Mammary epithelial cell (primary cell): ENCODE measurements at regions of chr1 and their contacts with region 1.

Region 1: DNA sequence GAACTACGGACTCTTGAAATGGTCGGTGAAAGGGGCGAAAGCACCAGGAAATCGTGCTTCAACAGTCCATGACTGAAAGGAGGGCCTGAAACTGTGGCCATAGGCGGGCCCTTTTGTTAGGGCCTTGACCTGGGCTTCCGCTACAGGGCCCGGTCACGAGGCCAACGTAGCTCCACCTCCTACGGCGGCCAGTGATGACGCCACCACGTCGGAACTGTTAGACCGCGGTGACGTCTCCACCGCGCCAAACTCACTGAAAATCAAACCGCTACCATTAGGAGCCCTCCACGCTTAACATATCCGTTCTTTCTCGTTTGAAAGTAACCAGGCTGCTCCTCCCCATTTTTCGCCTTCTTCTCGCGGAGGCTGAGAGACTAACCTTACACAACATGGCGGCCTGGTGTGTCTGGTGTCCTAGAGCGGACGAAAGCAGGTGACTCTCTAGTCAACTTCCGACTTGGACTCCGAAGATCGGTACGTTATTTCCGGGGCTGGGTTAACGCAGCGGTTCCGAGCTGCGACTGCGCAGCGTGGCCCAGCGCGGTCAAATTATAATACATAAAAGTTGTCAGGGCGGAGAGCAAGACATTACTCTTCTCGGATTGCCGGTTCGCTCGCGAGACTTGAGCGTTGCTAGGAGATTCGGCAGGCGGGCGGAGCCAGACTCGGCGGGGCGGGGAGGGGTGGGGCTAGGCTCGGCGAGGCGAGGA is 376 bp upstream of the CACYBP start:
- DNase-seq: peak; percentile 99
- H3K4me3 ChIP-seq: peak overlapping the region; percentile 65 to 98 (median 93)
- H3K27ac ChIP-seq: peak overlapping the region; percentile 97
- H3K4me1 ChIP-seq: peaks cover 30% of the 10 kb centered on the region
- H3K27me3 ChIP-seq: no peaks in the 10 kb centered on the region
- CTCF ChIP-seq: no peak

Region 2: DNA sequence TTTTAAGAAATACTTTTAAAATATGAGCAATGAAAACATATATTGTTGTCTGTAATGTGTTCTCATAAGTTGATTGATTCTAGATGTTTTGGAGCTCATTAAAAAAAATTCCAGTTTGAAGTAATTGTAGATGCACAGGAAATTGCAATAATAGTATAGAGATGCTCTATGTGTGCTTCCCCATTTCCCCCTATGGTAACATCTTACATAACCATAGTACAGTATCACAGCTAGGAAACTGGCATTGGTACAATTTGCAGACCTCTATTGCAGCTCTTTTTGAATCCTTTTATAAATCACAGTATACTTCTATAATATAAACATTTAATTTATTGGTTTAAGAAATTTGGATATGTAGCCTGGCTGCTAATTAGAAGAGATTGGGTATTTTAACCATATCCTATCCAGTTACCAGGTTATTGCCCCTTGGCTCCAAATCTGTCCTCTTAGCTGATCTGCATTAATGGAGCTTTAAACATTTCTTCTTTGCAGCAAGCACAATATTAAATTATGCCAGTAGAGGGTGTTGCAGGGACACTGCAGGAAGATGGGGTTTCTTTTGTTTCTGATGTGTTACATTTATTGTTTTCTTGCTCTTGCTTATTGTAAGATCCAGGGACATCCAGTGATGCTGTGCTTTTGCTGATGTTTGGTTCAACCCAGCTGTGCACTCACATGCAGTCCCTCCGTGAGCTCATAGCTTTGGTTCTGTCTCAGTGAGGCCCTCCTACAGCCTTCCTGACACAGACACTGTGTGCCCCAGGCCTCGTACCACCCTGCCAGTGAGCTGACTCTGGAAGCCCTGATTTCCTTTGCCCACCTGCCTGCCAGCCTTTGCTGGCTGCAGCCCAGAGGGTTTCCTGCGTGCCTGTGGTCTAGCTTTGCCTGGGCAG is 736.8 kb before region 1 on chr1:
- CTCF ChIA-PET with region 1: interaction called, 29 read pairs
- dilution Hi-C with region 1: no loop called
- in situ Hi-C with region 1: loop called (anchors 25 kb)
- intact Hi-C with region 1: loop called (anchors 10 kb)
- DNase-seq: peak; percentile 70
- H3K4me3 ChIP-seq: no peak overlapping the region
- H3K27ac ChIP-seq: no peak overlapping the region
- H3K4me1 ChIP-seq: peaks cover 6% of the 10 kb centered on the region
- H3K27me3 ChIP-seq: no peaks in the 10 kb centered on the region
- CTCF ChIP-seq: peak; percentile 81 to 84

Region 3: GRCh38 chr1:174769961-174770549 is 229.3 kb before region 1 on chr1:
- CTCF ChIA-PET with region 1: no interaction called
- dilution Hi-C with region 1: no loop called
- in situ Hi-C with region 1: no loop called
- intact Hi-C with region 1: loop called (anchors 1 kb)
- DNase-seq: peak; percentile 34
- H3K4me3 ChIP-seq: no peak overlapping the region
- H3K27ac ChIP-seq: no peak overlapping the region
- H3K4me1 ChIP-seq: no peaks in the 10 kb centered on the region
- H3K27me3 ChIP-seq: no peaks in the 10 kb centered on the region
- CTCF ChIP-seq: peak; percentile 68 to 72

Region 4: GRCh38 chr1:174789399-174789798 is 210.0 kb before region 1 on chr1:
- CTCF ChIA-PET with region 1: no interaction called
- dilution Hi-C with region 1: loop called (anchors 5 kb)
- in situ Hi-C with region 1: no loop called
- intact Hi-C with region 1: no loop called
- DNase-seq: peak; percentile 71
- H3K4me3 ChIP-seq: peak overlapping the region in 1 of 3 experiments; percentile 32
- H3K27ac ChIP-seq: peak overlapping the region; percentile 89
- H3K4me1 ChIP-seq: peaks cover 25% of the 10 kb centered on the region
- H3K27me3 ChIP-seq: no peaks in the 10 kb centered on the region
- CTCF ChIP-seq: no peak

Region 5: GRCh38 chr1:174815036-174815435 is 184.3 kb before region 1 on chr1:
- CTCF ChIA-PET with region 1: no interaction called
- dilution Hi-C with region 1: no loop called
- in situ Hi-C with region 1: no loop called
- intact Hi-C with region 1: loop called (anchors 5 kb)
- DNase-seq: peak; percentile 92
- H3K4me3 ChIP-seq: no peak overlapping the region
- H3K27ac ChIP-seq: peak overlapping the region; percentile 52
- H3K4me1 ChIP-seq: peaks cover 48% of the 10 kb centered on the region
- H3K27me3 ChIP-seq: no peaks in the 10 kb centered on the region
- CTCF ChIP-seq: no peak

Region 6: GRCh38 chr1:175023043-175023921 is 23.9 kb after region 1 on chr1 and contains the start of gene MRPS14:
- CTCF ChIA-PET with region 1: no interaction called
- dilution Hi-C with region 1: no loop called
- in situ Hi-C with region 1: no loop called
- intact Hi-C with region 1: loop called (anchors 2 kb)
- DNase-seq: peak; percentile 96
- H3K4me3 ChIP-seq: peak within 1 kb of the TSS; percentile 73 to 93 (median 88)
- H3K27ac ChIP-seq: peak within 1 kb of the TSS; percentile 72
- H3K4me1 ChIP-seq: no peaks in the 10 kb centered on the region
- H3K27me3 ChIP-seq: no peaks in the 10 kb centered on the region
- CTCF ChIP-seq: no peak
- total RNA-seq, gene MRPS14: 13.3 to 23.4 TPM

Region 7: GRCh38 chr1:175090780-175091179 is 91.4 kb after region 1 on chr1:
- CTCF ChIA-PET with region 1: no interaction called
- dilution Hi-C with region 1: no loop called
- in situ Hi-C with region 1: no loop called
- intact Hi-C with region 1: no loop called
- DNase-seq: no peak
- H3K4me3 ChIP-seq: no peak overlapping the region
- H3K27ac ChIP-seq: no peak overlapping the region
- H3K4me1 ChIP-seq: no peaks in the 10 kb centered on the region
- H3K27me3 ChIP-seq: no peaks in the 10 kb centered on the region
- CTCF ChIP-seq: no peak

Region 8: DNA sequence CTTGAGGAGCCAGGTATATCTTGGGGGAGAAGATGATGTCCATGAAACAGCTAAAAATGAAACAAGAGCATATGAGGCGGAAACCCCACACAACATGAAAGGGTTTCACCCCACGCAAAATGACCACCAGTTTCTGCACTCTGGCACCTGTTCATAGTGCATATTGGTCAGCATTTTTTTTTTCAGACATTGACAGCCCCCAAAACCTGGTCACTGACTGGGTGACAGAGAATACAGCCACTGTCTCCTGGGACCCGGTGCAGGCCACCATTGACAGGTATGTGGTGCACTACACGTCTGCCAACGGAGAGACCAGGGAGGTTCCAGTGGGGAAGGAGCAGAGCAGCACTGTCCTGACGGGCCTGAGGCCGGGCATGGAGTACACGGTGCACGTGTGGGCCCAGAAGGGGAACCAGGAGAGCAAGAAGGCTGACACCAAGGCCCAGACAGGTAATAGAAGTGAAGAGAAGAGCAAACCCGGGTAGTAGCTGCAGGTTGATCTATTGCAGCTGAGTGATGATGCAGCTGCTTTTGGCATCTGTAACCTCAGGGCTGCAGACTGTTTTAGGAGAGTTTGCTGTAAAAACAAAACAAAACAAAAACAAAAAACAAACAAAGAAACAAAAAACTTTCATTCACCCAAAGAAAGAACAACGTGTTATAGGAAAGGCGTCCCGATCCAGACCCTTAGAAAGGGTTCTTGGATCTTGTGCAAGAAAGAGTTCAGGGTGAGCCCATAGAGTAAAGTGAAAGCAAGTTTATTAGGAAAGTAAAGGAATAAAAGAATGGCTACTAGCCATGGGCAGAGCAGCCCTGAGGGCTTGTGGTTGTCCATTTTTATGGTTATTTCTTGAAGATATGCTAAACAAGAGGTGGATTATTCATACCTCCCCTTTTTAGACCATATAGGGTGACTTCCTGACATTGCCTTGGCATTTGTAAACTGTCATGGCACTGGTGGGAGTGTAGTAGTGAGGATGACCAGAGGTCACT is 119.3 kb after region 1 on chr1:
- CTCF ChIA-PET with region 1: no interaction called
- dilution Hi-C with region 1: no loop called
- in situ Hi-C with region 1: no loop called
- intact Hi-C with region 1: no loop called
- DNase-seq: no peak
- H3K4me3 ChIP-seq: no peak overlapping the region
- H3K27ac ChIP-seq: no peak overlapping the region
- H3K4me1 ChIP-seq: no peaks in the 10 kb centered on the region
- H3K27me3 ChIP-seq: no peaks in the 10 kb centered on the region
- CTCF ChIP-seq: no peak